ENCODE measurements at regions of chr1 and their contacts with region 1.

Region 1: DNA sequence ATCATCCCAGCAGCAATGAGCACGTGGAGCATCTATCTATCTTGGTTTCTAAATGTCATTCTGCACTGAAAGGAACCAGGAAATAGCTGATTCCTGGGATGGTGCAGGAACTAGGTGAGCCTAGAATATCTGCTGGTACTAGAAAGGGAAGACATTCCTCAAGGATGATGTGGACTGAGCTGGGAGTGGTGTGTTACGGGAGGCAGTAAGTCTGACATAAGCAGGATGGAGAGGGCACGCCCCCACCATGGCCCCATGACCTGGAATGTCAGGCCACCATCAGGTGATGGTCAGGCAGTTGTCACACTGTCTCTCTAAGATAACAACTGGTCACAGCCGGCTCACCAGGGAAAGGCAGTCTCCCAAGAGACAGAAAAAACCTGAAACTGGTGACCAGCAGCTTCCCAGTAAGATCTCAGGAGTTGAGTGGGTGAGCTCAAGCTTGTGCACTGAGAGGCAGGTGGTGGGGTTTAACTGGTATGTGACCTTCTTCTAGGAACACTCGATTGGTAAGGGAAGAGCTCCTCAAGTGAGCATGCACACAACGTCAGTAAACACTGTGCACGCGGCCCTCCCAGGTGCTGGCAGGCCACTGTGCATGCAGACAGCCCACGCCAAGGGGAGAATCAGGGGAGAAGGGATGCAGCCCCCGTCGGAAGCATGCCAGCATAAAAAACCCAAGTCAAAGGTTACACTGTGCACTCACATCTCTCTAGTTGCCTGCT is 148.7 kb downstream of the ADSS2 start:
- DNase-seq: peak; percentile 83 to 89
- ATAC-seq: peak; percentile 89 to 94
- H3K4me3 ChIP-seq: no peak overlapping the region
- H3K27ac ChIP-seq: peak overlapping the region; percentile 59 to 79
- H3K4me1 ChIP-seq: peaks cover 30% of the 10 kb centered on the region
- CTCF ChIP-seq: no peak
- EP300 ChIP-seq: no peak
- POLR2A ChIP-seq: no peak
- RAD21 ChIP-seq: 0 out of 5 replicates have a peak, but pooled peaks of 1 of the 2 experiments have one; percentile 17

Region 2: DNA sequence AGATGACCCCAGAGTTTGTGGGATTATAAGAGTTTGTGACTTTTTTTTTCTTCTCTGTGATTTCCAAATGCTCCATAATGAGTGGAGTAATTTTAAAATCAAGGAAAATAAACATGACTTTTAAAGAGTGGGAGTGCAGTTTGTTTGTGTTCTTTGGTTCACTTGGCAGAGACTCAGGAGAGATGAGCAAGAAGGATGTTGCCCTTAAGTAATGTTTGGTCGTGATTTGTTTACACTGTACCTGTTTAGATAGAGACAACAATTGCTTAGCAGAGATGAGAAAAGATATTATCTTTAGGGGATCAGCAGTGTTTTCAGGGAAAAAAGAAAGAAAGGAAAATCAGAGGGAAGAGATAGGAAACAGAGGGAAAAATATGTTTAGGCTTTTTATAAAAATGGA is 22.2 kb before region 1 on chr1:
- CTCF ChIA-PET with region 1: interaction called, 24 read pairs
- POLR2A ChIA-PET with region 1: no interaction called
- DNase-seq: peak; percentile 35 to 78
- ATAC-seq: peak; percentile 48 to 80; a peak in 4 of 6 replicates
- H3K4me3 ChIP-seq: no peak overlapping the region
- H3K27ac ChIP-seq: peak overlapping the region; percentile 61; a peak in 5 of 6 replicates
- H3K4me1 ChIP-seq: peaks cover 28% of the 10 kb centered on the region
- CTCF ChIP-seq: no peak
- EP300 ChIP-seq: no peak; a peak in 1 of 5 replicates
- POLR2A ChIP-seq: no peak
- RAD21 ChIP-seq: no peak

Measured in A549 (cell line).